ENCODE measurements at regions of chr4 and their contacts with region 1.

Region 1: DNA sequence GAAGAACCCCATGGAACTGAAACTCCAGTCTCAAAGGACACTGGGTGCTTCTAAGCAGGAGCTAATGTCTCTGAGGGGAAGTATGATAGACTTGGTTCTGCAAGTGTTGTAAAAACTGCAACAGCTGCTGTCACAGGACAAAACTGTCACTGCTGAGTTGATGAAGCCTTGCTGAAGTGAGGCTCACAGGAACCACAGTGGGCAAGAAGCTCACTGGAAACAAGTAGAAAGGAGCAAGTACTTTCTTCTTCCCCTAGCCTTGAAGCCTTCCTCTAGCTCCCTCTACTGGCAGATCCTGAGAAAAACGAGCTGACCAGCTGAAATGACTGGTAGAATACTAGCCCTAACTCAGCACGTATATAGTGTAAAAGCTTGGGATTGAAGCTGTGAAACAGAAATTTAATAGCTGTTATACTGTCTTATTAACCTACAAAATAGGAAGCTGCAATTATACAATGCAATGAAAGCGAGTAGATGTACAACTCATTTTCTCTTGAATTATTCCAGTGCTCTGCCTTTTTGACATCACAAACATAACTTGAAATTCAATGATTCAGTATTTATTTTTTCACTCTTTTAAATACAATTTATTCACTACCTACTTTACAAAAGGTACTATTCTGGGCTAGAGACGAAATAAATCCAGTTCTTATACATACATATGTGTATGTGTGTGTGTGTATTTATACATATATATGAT is 91.4 kb downstream of the GABRB1 start:
- DNase-seq: peak; percentile 21
- ATAC-seq: peak; percentile 94
- H3K4me3 ChIP-seq: no peak overlapping the region
- H3K27ac ChIP-seq: no peak overlapping the region
- H3K4me1 ChIP-seq: no peaks in the 10 kb centered on the region
- H3K27me3 ChIP-seq: no peaks in the 10 kb centered on the region
- CTCF ChIP-seq: peak; percentile 84 to 91 (median 90)
- EP300 ChIP-seq: 0 out of 4 replicates have a peak, but pooled peaks of 1 of the 2 experiments have one; percentile 24
- POLR2A ChIP-seq: no peak
- RAD21 ChIP-seq: peak; percentile 83

Region 2: DNA sequence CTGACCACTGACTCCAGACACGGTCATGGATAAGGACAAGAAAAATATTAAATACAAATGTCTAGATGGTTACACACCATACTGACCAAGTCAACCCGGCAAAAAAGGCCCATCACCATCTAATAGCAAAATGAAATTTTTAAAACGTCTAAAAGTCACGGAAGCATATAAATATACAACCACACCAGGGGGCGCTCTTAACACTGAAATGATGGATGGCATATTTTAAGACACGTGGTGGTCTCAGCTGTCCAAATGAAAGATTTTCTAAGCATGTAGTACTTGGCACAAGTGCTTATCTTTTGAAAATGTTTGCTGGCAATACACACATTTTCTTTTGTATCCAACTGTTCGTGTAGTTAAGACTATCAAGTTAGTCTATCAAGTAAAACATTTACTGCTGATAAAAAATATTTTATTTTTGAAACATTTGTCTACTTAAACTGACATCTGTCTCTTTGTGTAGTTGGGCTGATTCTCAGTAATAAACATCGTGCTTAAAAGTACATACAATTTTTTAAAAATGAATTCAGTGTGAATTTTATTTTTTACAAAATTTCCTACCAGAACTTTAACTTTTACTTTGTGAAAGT is 278.3 kb before region 1 on chr4:
- CTCF ChIA-PET with region 1: interaction called, 13 read pairs
- POLR2A ChIA-PET with region 1: no interaction called
- RAD21 ChIA-PET with region 1: interaction called, 19 read pairs
- SMC1A ChIA-PET with region 1: interaction called, 29 read pairs
- in situ Hi-C with region 1: no loop called
- intact Hi-C with region 1: loop called (anchors 2 kb)
- DNase-seq: peak; percentile 4
- ATAC-seq: peak; percentile 81
- H3K4me3 ChIP-seq: no peak overlapping the region
- H3K27ac ChIP-seq: no peak overlapping the region
- H3K4me1 ChIP-seq: no peaks in the 10 kb centered on the region
- H3K27me3 ChIP-seq: no peaks in the 10 kb centered on the region
- CTCF ChIP-seq: peak; percentile 57 to 68 (median 66)
- EP300 ChIP-seq: no peak
- POLR2A ChIP-seq: no peak
- RAD21 ChIP-seq: peak; percentile 74

Region 3: DNA sequence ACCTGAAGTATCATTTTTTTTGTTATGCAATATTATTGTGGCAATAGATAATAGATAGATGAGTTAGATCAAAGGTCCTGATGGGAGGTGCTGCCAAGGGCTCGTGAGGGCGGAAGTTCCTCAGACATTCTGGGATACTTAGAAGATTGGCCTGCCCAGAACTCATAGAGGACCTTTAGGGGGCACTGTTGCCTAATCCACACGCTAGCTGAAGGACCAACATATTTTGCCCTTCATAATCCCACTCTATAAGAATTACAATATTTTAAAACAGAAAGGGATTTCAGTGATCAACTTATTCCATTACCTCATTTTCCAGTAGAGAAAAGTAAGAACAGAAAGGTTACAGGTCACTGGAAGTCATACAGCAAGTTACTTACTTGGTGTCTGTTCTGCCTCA is 190.8 kb before region 1 on chr4:
- CTCF ChIA-PET with region 1: interaction called, 64 read pairs
- POLR2A ChIA-PET with region 1: no interaction called
- RAD21 ChIA-PET with region 1: interaction called, 25 read pairs
- SMC1A ChIA-PET with region 1: interaction called, 62 read pairs
- in situ Hi-C with region 1: no loop called
- intact Hi-C with region 1: loop called (anchors 2 kb)
- DNase-seq: peak; percentile 2
- ATAC-seq: peak; percentile 96
- H3K4me3 ChIP-seq: no peak overlapping the region
- H3K27ac ChIP-seq: no peak overlapping the region
- H3K4me1 ChIP-seq: no peaks in the 10 kb centered on the region
- H3K27me3 ChIP-seq: no peaks in the 10 kb centered on the region
- CTCF ChIP-seq: peak; percentile 58 to 76 (median 63)
- EP300 ChIP-seq: no peak
- POLR2A ChIP-seq: no peak
- RAD21 ChIP-seq: peak; percentile 79

Region 4: GRCh38 chr4:47032415-47033106 is 90.2 kb before region 1 on chr4:
- CTCF ChIA-PET with region 1: interaction called, 33 read pairs
- POLR2A ChIA-PET with region 1: interaction called, 5 read pairs
- RAD21 ChIA-PET with region 1: interaction called, 18 read pairs
- SMC1A ChIA-PET with region 1: interaction called, 24 read pairs
- in situ Hi-C with region 1: no loop called
- intact Hi-C with region 1: no loop called
- DNase-seq: no peak
- ATAC-seq: peak; percentile 98
- H3K4me3 ChIP-seq: peak overlapping the region; percentile 21; the same call in 1 of the 2 replicates
- H3K27ac ChIP-seq: no peak overlapping the region
- H3K4me1 ChIP-seq: no peaks in the 10 kb centered on the region
- H3K27me3 ChIP-seq: peaks cover 2 to 10% of the 10 kb centered on the region in 2 experiments
- CTCF ChIP-seq: peak; percentile 62 to 83 (median 78)
- EP300 ChIP-seq: no peak
- POLR2A ChIP-seq: no peak
- RAD21 ChIP-seq: peak; percentile 71

Region 5: GRCh38 chr4:47084111-47084510 is 38.6 kb before region 1 on chr4:
- CTCF ChIA-PET with region 1: interaction called, 6 read pairs
- POLR2A ChIA-PET with region 1: no interaction called
- RAD21 ChIA-PET with region 1: interaction called, 6 read pairs
- SMC1A ChIA-PET with region 1: interaction called, 13 read pairs
- in situ Hi-C with region 1: no loop called
- intact Hi-C with region 1: no loop called
- DNase-seq: no peak
- ATAC-seq: no peak
- H3K4me3 ChIP-seq: no peak overlapping the region
- H3K27ac ChIP-seq: no peak overlapping the region
- H3K4me1 ChIP-seq: no peaks in the 10 kb centered on the region
- H3K27me3 ChIP-seq: no peaks in the 10 kb centered on the region
- CTCF ChIP-seq: no peak
- EP300 ChIP-seq: no peak
- POLR2A ChIP-seq: no peak
- RAD21 ChIP-seq: no peak

Region 6: DNA sequence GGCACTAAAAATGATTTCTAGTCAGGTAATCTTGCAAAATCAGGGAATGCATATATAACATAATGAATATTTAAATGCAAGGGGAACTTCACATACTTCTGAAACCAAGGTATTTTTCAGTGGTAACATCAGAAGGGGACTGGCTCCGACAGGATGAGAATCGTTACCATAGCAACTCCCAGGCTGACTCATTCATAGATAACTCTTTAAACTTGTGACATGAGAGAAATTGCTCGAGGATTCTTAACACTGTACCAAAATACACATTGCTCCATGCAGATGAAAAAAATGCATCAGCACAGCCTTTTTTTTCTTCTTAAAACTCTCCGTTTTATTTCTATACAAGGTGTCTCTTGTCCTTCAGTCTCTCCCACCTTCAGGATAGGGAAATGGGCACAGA is 22.9 kb after region 1 on chr4:
- CTCF ChIA-PET with region 1: interaction called, 21 read pairs
- POLR2A ChIA-PET with region 1: no interaction called
- RAD21 ChIA-PET with region 1: interaction called, 5 read pairs
- SMC1A ChIA-PET with region 1: interaction called, 6 read pairs
- in situ Hi-C with region 1: no loop called
- intact Hi-C with region 1: no loop called
- DNase-seq: peak; percentile 41
- ATAC-seq: peak; percentile 97
- H3K4me3 ChIP-seq: no peak overlapping the region
- H3K27ac ChIP-seq: no peak overlapping the region
- H3K4me1 ChIP-seq: peaks cover 9% of the 10 kb centered on the region
- H3K27me3 ChIP-seq: no peaks in the 10 kb centered on the region
- CTCF ChIP-seq: no peak
- EP300 ChIP-seq: peak; percentile 51 to 80; a peak in 3 of 4 replicates
- POLR2A ChIP-seq: no peak
- RAD21 ChIP-seq: no peak

Region 7: GRCh38 chr4:47315346-47315745 is 192.6 kb after region 1 on chr4:
- CTCF ChIA-PET with region 1: no interaction called
- POLR2A ChIA-PET with region 1: no interaction called
- RAD21 ChIA-PET with region 1: no interaction called
- SMC1A ChIA-PET with region 1: no interaction called
- in situ Hi-C with region 1: no loop called
- intact Hi-C with region 1: no loop called
- DNase-seq: no peak
- ATAC-seq: peak; percentile 84
- H3K4me3 ChIP-seq: no peak overlapping the region
- H3K27ac ChIP-seq: no peak overlapping the region
- H3K4me1 ChIP-seq: no peaks in the 10 kb centered on the region
- H3K27me3 ChIP-seq: no peaks in the 10 kb centered on the region
- CTCF ChIP-seq: no peak
- EP300 ChIP-seq: peak in 1 of 2 experiments; percentile 20; a peak in 1 of 4 replicates
- POLR2A ChIP-seq: no peak
- RAD21 ChIP-seq: no peak

Region 8: DNA sequence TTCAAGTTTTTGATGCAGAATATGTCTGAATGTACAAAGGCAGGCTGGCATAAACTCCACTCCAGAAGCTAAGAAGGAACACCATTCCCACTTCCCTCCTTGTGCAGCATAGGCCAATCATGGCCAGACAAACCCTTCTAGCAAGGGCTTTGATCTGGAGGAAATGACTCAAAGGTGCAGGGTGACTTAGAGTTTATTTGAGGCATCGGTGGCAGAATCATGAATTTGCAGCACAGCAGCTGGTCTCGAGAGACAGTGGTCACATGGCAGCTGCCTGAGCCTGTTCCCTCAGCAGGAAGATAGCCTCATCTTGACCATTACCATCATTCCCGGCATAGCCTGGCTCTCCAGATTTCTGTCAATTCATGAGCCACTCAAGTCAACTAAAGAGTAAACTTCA is 516.8 kb after region 1 on chr4:
- CTCF ChIA-PET with region 1: no interaction called
- POLR2A ChIA-PET with region 1: no interaction called
- RAD21 ChIA-PET with region 1: no interaction called
- SMC1A ChIA-PET with region 1: no interaction called
- in situ Hi-C with region 1: no loop called
- intact Hi-C with region 1: no loop called
- DNase-seq: no peak
- ATAC-seq: no peak
- H3K4me3 ChIP-seq: no peak overlapping the region
- H3K27ac ChIP-seq: no peak overlapping the region
- H3K4me1 ChIP-seq: no peaks in the 10 kb centered on the region
- H3K27me3 ChIP-seq: no peaks in the 10 kb centered on the region
- CTCF ChIP-seq: no peak
- EP300 ChIP-seq: no peak
- POLR2A ChIP-seq: no peak
- RAD21 ChIP-seq: no peak